Tibial artery (tissue), 4 donors: ENCODE measurements at regions of chr13 and their contacts with region 1.

Region 1: GRCh38 chr13:64579331-64579730 is 2650.8 kb downstream of the PCDH9 start:
- DNase-seq: no peak
- H3K4me3 ChIP-seq: no peak overlapping the region
- H3K27ac ChIP-seq: no peak overlapping the region
- H3K4me1 ChIP-seq: no peaks in the 10 kb centered on the region
- H3K27me3 ChIP-seq: no peaks in the 10 kb centered on the region
- CTCF ChIP-seq: no peak

Region 2: GRCh38 chr13:63554157-63554556 is 1025.2 kb before region 1 on chr13:
- intact Hi-C with region 1: no loop called
- DNase-seq: no peak
- H3K4me3 ChIP-seq: no peak overlapping the region
- H3K27ac ChIP-seq: no peak overlapping the region
- H3K4me1 ChIP-seq: no peaks in the 10 kb centered on the region
- H3K27me3 ChIP-seq: no peaks in the 10 kb centered on the region
- CTCF ChIP-seq: no peak

Region 3: DNA sequence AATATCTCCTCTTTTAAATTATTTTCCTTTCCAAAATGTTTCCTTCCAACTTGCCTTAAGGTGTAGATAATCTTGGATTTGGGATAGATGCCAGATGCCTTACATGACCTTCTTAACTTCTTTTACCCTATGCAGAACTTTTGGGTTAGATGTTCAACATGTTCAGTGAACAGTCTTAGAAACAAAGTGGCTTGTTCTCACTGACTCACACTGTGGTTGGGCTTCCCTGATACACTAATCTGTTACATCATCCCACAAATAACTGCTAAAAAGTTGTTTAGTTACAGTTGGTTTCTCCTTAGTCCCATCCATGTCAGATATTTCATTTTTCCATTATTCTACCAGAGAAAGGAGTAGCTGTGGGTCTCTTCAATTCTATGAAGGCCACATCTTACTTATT is 12.6 kb after region 1 on chr13:
- intact Hi-C with region 1: no loop called
- DNase-seq: no peak
- H3K4me3 ChIP-seq: no peak overlapping the region
- H3K27ac ChIP-seq: no peak overlapping the region
- H3K4me1 ChIP-seq: no peaks in the 10 kb centered on the region
- H3K27me3 ChIP-seq: no peaks in the 10 kb centered on the region
- CTCF ChIP-seq: no peak

Region 4: DNA sequence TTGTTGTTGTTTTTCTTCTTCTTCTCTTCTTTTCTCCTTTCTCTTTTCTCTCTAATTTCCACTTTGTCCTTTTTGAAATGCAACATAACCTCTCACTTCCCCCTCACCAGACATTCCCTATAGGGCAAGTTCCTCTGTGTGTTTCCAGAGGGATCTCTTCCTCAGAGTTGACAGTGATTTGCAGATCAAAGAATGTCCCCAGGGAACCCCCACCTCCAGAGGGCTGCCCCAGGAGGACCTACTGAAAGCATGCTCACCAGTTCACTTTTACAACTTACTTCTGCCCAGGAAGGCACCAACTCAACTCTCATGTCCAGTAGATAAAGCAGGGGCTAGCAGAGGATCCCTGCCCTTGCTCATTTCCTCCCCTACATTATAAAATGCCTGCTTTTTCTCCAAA is 1002.8 kb after region 1 on chr13:
- intact Hi-C with region 1: loop called (anchors 5 kb)
- DNase-seq: no peak
- H3K4me3 ChIP-seq: no peak overlapping the region
- H3K27ac ChIP-seq: no peak overlapping the region
- H3K4me1 ChIP-seq: no peaks in the 10 kb centered on the region
- H3K27me3 ChIP-seq: no peaks in the 10 kb centered on the region
- CTCF ChIP-seq: no peak